ENCODE measurements at regions of chr16 and their contacts with region 1.

Region 1: GRCh38 chr16:22355487-22355908 is 18.9 kb downstream of the CDR2 start:
- DNase-seq: no peak
- H3K4me3 Mint-ChIP-seq: no peak overlapping the region
- H3K27ac Mint-ChIP-seq: peak overlapping the region; percentile 31
- H3K4me1 Mint-ChIP-seq: peaks cover 49% of the 10 kb centered on the region
- H3K27me3 Mint-ChIP-seq: no peaks in the 10 kb centered on the region
- CTCF ChIP-seq: no peak

Region 2: GRCh38 chr16:22321339-22322001 is 34.0 kb before region 1 on chr16:
- CTCF ChIA-PET with region 1: no interaction called
- intact Hi-C with region 1: no loop called
- DNase-seq: peak; percentile 69
- H3K4me3 Mint-ChIP-seq: no peak overlapping the region
- H3K27ac Mint-ChIP-seq: no peak overlapping the region
- H3K4me1 Mint-ChIP-seq: no peaks in the 10 kb centered on the region
- H3K27me3 Mint-ChIP-seq: no peaks in the 10 kb centered on the region
- CTCF ChIP-seq: peak; percentile 93

Region 3: GRCh38 chr16:22369221-22369811 is 13.8 kb after region 1 on chr16:
- CTCF ChIA-PET with region 1: interaction called, 5 read pairs
- intact Hi-C with region 1: loop called (anchors 2 kb)
- DNase-seq: no peak
- H3K4me3 Mint-ChIP-seq: peak overlapping the region; percentile 54
- H3K27ac Mint-ChIP-seq: peak overlapping the region; percentile 72
- H3K4me1 Mint-ChIP-seq: peaks cover 57% of the 10 kb centered on the region
- H3K27me3 Mint-ChIP-seq: no peaks in the 10 kb centered on the region
- CTCF ChIP-seq: no peak

Measured in Calu3 (cell line).